ENCODE measurements at regions of chr22 and their contacts with region 1.

Region 1: DNA sequence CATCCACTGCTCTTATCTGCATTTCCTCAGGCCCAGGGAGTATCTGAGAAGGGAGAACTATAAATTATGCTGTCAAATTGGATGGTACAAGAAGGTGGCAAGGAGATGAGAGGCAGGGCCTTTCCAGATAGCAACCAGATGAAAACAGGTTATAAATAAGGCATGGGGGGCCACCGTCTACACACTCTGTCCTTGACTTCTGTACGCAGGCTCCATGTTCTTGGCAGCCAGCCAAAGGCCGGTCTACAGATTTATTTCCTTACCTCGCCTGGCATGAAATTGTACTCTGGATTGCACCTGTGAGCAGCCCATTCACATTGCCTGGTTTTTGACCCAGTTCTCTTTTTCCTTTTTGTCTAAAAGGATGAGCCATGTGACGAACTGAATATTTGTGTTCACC is 157.1 kb upstream of the LARGE1 start:
- DNase-seq: no peak
- H3K4me3 ChIP-seq: no peak overlapping the region
- H3K27ac ChIP-seq: no peak overlapping the region
- H3K4me1 ChIP-seq: no peaks in the 10 kb centered on the region
- CTCF ChIP-seq: no peak

Region 2: DNA sequence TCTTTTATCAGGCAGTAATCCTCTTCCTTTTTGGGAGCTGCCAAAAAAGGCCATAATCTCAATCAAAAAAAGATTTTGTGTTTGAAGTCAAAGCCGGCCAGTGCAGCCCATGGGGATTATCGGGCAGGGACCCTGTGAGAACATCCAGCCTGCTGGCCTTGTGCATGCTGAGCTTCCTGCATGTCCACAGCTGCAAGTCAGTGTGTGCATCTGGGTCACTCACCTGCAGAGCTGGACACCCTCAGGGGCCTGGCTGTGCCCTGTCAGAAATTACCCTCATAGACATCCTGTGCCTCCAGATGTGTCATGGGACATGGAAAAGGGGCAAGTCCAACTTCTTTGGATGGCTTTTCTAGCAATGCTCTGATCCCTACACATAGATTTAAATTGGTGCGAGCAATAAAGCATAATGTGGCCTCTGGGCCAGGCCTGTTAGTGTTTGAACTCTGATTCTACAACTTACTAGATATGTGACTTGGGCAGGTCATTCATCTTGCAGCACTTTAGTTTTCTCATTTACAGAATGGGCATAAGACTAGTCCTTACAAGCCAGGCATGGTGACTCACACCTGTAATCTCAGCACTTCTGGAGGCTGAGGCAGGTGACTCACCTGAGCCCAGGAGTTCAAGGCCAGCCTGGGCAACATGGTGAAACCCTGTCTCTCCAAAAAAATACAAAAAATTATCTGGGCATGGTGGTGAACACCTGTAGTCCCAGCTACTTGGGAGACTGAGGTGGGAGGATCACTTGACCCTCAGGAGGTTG is 75.5 kb before region 1 on chr22:
- CTCF ChIA-PET with region 1: no interaction called
- POLR2A ChIA-PET with region 1: no interaction called
- intact Hi-C with region 1: loop called (anchors 10 kb)
- DNase-seq: no peak
- H3K4me3 ChIP-seq: no peak overlapping the region
- H3K27ac ChIP-seq: no peak overlapping the region
- H3K4me1 ChIP-seq: no peaks in the 10 kb centered on the region
- CTCF ChIP-seq: no peak

Measured in OCI-LY7 (cell line).